BJ (cell line): ENCODE measurements at regions of chr9 and their contacts with region 1.

Region 1: DNA sequence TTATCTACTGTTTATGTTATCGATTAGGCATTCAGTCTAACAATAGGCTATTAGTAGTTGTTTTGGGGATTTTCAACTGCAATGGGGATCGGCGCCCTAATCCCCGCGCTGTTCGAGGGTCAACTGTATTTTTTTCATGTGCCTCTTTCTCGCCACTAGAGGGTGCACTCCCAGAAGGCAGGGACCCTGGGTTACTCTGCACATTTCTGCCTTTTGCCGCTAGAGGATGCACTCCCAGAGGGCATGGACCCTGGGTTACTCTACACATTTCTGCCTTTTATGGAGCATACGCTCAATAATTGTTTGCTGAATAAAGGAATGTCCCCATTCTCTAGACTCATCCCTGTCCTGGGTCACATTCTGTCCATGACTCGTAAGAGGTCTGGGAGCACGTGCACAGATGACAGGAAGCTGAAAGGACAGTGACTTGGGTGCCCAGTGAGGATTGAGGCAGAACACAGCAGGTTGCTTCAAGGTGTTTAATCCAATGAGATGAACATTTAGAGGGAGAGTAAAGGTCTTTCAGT is 27.9 kb upstream of the RECK start:
- DNase-seq: no peak
- H3K4me3 ChIP-seq: no peak overlapping the region
- H3K27me3 ChIP-seq: peaks cover 1% of the 10 kb centered on the region
- CTCF ChIP-seq: peak; percentile 100

Region 2: GRCh38 chr9:35367451-35367850 is 641.4 kb before region 1 on chr9:
- CTCF ChIA-PET with region 1: no interaction called
- POLR2A ChIA-PET with region 1: no interaction called
- DNase-seq: peak; percentile 92
- H3K4me3 ChIP-seq: no peak overlapping the region
- H3K27me3 ChIP-seq: no peaks in the 10 kb centered on the region
- CTCF ChIP-seq: no peak

Region 3: DNA sequence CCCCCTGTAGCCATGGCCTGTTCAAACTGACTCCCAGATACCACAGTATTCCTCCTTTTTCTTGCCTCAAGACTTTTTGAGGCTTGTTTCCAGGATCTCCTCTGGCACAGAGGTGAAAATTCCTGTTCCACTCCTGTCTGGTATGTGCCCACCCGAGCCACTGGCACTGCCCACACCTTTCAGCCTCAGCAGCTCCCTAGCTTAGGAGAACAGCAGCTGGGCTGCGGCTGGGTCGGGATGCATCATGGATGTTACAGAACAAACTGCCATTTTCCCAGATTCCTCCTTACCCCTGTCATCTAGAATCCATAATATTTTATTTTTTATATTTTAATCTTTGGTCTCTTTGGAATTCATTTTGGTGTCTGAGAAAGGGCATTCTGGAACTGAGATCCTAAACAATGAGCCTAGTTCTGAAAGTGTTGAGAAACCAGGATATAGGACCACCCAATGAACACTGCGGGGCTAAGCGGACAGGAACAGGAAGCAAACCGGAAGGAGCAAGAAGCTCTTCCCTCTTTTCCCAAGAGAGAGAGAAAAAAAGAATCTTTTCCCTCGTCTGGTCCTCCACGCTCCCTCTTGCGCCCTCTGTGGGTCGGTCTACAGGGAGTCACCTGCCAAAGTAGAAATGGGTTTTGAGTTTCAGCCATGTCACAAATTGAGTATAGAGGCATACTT is 63.4 kb before region 1 on chr9:
- CTCF ChIA-PET with region 1: interaction called, 21 read pairs
- POLR2A ChIA-PET with region 1: interaction called, 3 read pairs
- DNase-seq: peak; percentile 26
- H3K4me3 ChIP-seq: no peak overlapping the region
- H3K27me3 ChIP-seq: no peaks in the 10 kb centered on the region
- CTCF ChIP-seq: peak; percentile 92

Region 4: DNA sequence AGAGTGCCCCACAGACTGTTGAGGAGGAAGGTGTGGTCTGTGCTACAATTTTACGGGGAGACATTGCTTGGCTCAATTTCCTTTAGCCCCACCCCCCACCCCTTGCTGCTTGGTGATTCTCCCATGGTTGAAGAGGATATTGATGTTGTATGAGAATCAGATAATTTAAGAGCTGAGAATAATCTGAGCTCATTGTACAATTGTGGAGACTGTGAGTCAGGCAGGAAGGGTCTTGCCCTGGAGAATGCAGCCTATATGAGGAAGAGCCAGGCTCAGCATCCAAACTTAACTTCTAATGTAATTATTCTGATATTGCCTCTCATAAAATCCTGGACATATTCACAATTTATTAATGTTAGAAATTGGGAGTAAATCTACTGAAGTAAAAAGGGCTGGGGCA is 24.8 kb before region 1 on chr9:
- CTCF ChIA-PET with region 1: interaction called, 19 read pairs
- POLR2A ChIA-PET with region 1: no interaction called
- DNase-seq: no peak
- H3K4me3 ChIP-seq: no peak overlapping the region
- H3K27me3 ChIP-seq: no peaks in the 10 kb centered on the region
- CTCF ChIP-seq: no peak

Region 5: DNA sequence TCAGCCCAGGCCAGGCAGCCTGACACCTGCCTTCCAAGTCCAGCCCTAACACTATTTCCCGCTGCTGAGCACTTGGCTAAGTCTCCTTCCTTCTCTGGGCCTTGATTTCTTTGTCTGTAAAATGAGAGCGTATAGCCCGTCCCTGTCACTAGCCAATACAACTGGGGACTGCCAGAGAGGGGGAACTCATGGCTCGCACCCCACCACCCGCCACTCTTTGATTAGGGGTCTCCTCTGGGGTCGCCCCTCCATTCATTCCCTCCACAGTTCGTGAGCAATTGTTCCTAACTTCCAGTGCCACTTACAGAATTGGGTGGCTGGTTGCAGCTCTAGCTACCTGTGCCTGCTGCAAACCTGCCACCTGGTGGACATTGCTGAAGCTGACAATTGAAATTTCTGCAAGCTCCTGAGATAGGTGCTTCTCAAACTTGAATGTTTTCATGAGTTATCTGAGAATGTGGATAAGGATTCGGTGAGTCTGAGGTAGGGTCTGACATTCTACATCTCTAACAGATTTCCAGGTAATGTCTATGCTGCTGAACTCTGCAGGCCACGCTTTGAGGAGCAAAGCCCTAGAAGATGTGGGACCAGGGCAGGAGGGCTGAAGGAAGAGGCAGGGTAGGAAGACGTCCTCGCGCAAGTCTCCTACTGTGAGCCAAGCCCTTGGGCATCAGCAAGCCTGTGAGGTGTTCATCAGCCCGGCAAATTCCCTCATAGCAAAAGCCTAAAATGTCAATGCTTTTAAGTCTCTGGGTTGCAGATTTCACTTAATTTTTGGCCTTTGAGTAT is 14.6 kb after region 1 on chr9:
- CTCF ChIA-PET with region 1: interaction called, 144 read pairs
- POLR2A ChIA-PET with region 1: no interaction called
- DNase-seq: no peak
- H3K4me3 ChIP-seq: no peak overlapping the region
- H3K27me3 ChIP-seq: no peaks in the 10 kb centered on the region
- CTCF ChIP-seq: peak; percentile 84

Region 6: DNA sequence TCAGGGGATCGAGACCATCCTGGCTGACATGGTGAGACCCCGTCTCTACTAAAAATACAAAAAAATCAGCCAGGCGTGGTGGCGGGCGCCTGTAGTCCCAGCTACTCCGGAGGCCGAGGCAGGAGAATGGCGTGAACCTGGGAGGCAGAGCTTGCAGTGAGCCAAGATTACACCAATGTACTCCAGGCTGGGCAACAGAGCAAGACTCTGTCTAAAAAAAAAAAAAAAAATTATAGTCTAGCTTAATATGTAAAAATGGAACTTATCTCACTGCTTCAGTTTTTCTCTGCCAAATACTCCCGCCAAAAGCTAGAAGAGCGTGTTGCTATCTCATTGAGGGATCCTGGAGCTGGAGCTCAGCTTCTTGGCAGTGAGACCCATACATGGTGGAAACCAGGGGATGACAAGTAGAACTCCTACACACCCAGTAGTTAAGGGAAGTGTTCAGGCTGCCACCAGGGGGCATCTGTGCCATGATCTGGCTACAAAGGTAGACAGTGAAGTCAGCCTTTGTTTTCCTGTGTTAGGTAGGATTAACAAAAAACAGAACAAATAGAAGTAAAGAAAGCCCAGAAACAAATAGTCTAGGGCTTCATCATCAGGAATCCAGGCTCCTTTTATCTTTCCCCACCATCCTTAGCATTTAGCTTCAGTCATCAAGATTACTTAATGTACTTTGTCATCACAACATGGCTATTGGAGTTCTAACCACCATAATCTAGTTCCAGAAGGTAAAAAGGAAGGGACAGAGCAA is 94.1 kb after region 1 on chr9:
- CTCF ChIA-PET with region 1: interaction called, 26 read pairs
- POLR2A ChIA-PET with region 1: no interaction called
- DNase-seq: no peak
- H3K4me3 ChIP-seq: no peak overlapping the region
- H3K27me3 ChIP-seq: no peaks in the 10 kb centered on the region
- CTCF ChIP-seq: peak; percentile 59